Sigmoid colon (tissue), 7 donors: ENCODE measurements at regions of chr2 and their contacts with region 1.

Region 1: GRCh38 chr2:198296665-198297308 is 492.4 kb downstream of the PLCL1 start:
- DNase-seq: no peak
- H3K4me3 ChIP-seq: no peak overlapping the region
- H3K27ac ChIP-seq: no peak overlapping the region
- H3K4me1 ChIP-seq: peaks cover 0 to 4% (median 0%) of the 10 kb centered on the region in 4 donors
- H3K27me3 ChIP-seq: no peaks in the 10 kb centered on the region
- CTCF ChIP-seq: peak; percentile 48 to 82 (median 74)
- EP300 ChIP-seq: no peak
- POLR2A ChIP-seq: no peak

Region 2: GRCh38 chr2:198127627-198128026 is 169.2 kb before region 1 on chr2:
- intact Hi-C with region 1: loop called (anchors 5 kb)
- DNase-seq: no peak
- H3K4me3 ChIP-seq: no peak overlapping the region
- H3K27ac ChIP-seq: no peak overlapping the region
- H3K4me1 ChIP-seq: peaks cover 0 to 9% (median 2%) of the 10 kb centered on the region in 4 donors
- H3K27me3 ChIP-seq: no peaks in the 10 kb centered on the region
- CTCF ChIP-seq: peak in 3 of 4 experiments; percentile 26 to 61 (median 55)
- EP300 ChIP-seq: no peak
- POLR2A ChIP-seq: no peak